Activated CD4-positive, alpha-beta T cell treated with anti-CD3 and anti-CD28 coated beads for 36 hours (primary cell): ENCODE measurements at regions of chr3 and their contacts with region 1.

Region 1: DNA sequence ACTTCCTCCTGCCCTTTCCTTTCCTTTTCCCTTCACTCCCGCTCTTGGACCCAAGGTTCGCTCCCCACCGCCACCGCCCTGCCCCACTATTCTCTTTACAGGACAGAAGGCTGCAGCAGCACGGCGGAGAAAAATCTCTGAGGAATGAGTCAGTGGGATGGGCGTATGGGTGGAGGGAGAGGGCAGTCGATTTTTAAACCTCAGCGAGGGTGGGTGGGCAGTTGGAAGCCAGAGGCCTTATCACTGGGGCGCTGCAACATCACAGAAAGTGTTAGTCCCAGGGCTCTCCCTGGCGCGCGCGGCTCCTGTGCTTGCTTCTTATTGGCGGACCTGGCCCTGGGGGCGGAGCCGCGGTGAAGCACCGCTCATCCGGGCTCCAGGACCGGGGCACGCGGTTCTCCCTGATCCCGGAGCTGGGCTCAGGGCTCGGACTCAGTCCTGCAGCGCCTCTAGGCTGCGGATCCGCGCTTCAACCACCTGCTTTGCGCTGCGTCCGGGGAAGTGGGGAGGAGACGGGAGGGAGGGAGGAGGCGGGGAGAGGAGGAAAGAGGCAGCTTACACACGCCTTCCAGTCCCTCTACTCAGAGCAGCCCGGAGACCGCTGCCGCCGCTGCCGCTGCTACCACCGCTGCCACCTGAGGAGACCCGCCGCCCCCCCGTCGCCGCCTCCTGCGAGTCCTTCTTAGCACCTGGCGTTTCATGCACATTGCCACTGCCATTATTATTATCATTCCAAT is at the start of gene ALCAM:
- DNase-seq: peak; percentile 92
- ATAC-seq: peak; percentile 64
- H3K4me3 Mint-ChIP-seq: peak within 1 kb of the TSS; percentile 94
- H3K27ac Mint-ChIP-seq: peak within 1 kb of the TSS; percentile 99
- H3K4me1 Mint-ChIP-seq: peaks cover 43% of the 10 kb centered on the region
- H3K27me3 Mint-ChIP-seq: peaks cover 23% of the 10 kb centered on the region
- total RNA-seq, gene ALCAM: 22.0 TPM

Region 2: DNA sequence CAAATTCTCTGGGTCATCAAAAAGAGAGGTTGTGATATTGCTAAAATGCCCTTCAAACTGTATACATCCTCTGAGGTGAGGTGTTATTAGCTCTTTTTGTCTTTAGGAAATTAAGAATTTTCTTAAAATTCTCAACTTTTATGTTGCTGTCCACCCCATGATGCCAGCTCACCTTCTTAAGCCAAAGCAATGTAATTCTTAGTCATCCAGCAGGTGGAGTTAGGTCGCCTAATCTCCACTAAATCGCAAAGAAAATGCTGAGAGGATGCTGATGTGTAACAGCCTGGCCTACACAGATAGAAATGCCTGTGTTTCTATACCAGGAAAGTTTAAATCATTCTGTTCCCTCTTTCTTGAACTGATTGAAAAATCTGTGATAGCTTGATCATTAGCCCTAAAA is 769.9 kb before region 1 on chr3:
- CTCF ChIA-PET with region 1: no interaction called
- POLR2A ChIA-PET with region 1: no interaction called
- intact Hi-C with region 1: loop called in 1 of 2 experiments (anchors 2 kb)
- DNase-seq: no peak
- ATAC-seq: peak; percentile 42
- H3K4me3 Mint-ChIP-seq: no peak overlapping the region
- H3K27ac Mint-ChIP-seq: no peak overlapping the region
- H3K4me1 Mint-ChIP-seq: peaks cover 3% of the 10 kb centered on the region
- H3K27me3 Mint-ChIP-seq: no peaks in the 10 kb centered on the region

Region 3: DNA sequence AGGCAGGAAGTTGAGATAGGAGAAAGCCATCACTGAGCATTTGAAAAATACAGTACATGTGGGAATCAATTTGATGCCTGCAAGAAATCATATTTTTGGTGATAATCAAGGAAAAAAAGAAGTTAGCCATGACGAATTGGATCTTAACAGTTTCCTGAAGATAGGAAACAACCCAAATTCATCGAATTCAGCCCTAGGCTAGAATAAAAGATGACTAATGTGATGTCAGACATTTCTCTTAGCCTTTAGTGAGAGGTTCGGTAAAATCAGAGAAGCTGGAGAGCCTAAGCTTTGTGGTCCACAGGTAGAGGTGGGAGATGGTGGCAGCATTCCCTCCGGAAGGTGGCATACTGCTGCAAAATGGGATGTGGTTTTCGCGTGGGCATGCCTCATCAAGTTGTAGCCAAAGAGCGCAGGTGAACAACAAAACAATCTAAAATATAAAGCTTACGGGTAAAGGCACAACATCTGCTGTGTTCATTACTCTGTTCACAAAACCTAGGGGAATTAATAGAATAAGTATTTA is 143.9 kb before region 1 on chr3:
- CTCF ChIA-PET with region 1: no interaction called
- POLR2A ChIA-PET with region 1: no interaction called
- intact Hi-C with region 1: no loop called
- DNase-seq: no peak
- ATAC-seq: no peak
- H3K4me3 Mint-ChIP-seq: no peak overlapping the region
- H3K27ac Mint-ChIP-seq: no peak overlapping the region
- H3K4me1 Mint-ChIP-seq: no peaks in the 10 kb centered on the region
- H3K27me3 Mint-ChIP-seq: peaks cover 2% of the 10 kb centered on the region

Region 4: GRCh38 chr3:105676621-105677300 is 310.3 kb after region 1 on chr3:
- CTCF ChIA-PET with region 1: no interaction called
- POLR2A ChIA-PET with region 1: no interaction called
- intact Hi-C with region 1: loop called in 1 of 2 experiments (anchors 2 kb)
- DNase-seq: peak; percentile 74
- ATAC-seq: peak; percentile 94
- H3K4me3 Mint-ChIP-seq: peak overlapping the region; percentile 27
- H3K27ac Mint-ChIP-seq: peak overlapping the region; percentile 87
- H3K4me1 Mint-ChIP-seq: peaks cover 27% of the 10 kb centered on the region
- H3K27me3 Mint-ChIP-seq: no peaks in the 10 kb centered on the region

Region 5: GRCh38 chr3:105868742-105869530 is 502.4 kb after region 1 on chr3 and contains the start of gene CBLB:
- CTCF ChIA-PET with region 1: no interaction called
- POLR2A ChIA-PET with region 1: interaction called, 6 read pairs
- intact Hi-C with region 1: loop called (anchors 1 to 5 kb)
- DNase-seq: peak; percentile 91
- ATAC-seq: peak; percentile 86
- H3K4me3 Mint-ChIP-seq: peak within 1 kb of the TSS; percentile 100
- H3K27ac Mint-ChIP-seq: peak within 1 kb of the TSS; percentile 100
- H3K4me1 Mint-ChIP-seq: peaks cover 36% of the 10 kb centered on the region
- H3K27me3 Mint-ChIP-seq: no peaks in the 10 kb centered on the region
- total RNA-seq, gene CBLB: 112 to 163 TPM

Region 6: GRCh38 chr3:106215047-106215446 is 848.6 kb after region 1 on chr3:
- CTCF ChIA-PET with region 1: no interaction called
- POLR2A ChIA-PET with region 1: no interaction called
- intact Hi-C with region 1: loop called (anchors 5 to 10 kb)
- DNase-seq: peak; percentile 62
- ATAC-seq: peak; percentile 91
- H3K4me3 Mint-ChIP-seq: no peak overlapping the region
- H3K27ac Mint-ChIP-seq: peak overlapping the region; percentile 73
- H3K4me1 Mint-ChIP-seq: peaks cover 59% of the 10 kb centered on the region
- H3K27me3 Mint-ChIP-seq: no peaks in the 10 kb centered on the region

Region 7: GRCh38 chr3:106428565-106428994 is 1062.1 kb after region 1 on chr3:
- CTCF ChIA-PET with region 1: no interaction called
- POLR2A ChIA-PET with region 1: interaction called, 3 read pairs
- intact Hi-C with region 1: loop called (anchors 1 to 10 kb)
- DNase-seq: peak; percentile 73
- ATAC-seq: peak; percentile 82
- H3K4me3 Mint-ChIP-seq: no peak overlapping the region
- H3K27ac Mint-ChIP-seq: peak overlapping the region; percentile 98
- H3K4me1 Mint-ChIP-seq: peaks cover 49% of the 10 kb centered on the region
- H3K27me3 Mint-ChIP-seq: no peaks in the 10 kb centered on the region